Heart left ventricle (tissue), 16 donors: ENCODE measurements at regions of chr10 and their contacts with region 1.

Region 1: DNA sequence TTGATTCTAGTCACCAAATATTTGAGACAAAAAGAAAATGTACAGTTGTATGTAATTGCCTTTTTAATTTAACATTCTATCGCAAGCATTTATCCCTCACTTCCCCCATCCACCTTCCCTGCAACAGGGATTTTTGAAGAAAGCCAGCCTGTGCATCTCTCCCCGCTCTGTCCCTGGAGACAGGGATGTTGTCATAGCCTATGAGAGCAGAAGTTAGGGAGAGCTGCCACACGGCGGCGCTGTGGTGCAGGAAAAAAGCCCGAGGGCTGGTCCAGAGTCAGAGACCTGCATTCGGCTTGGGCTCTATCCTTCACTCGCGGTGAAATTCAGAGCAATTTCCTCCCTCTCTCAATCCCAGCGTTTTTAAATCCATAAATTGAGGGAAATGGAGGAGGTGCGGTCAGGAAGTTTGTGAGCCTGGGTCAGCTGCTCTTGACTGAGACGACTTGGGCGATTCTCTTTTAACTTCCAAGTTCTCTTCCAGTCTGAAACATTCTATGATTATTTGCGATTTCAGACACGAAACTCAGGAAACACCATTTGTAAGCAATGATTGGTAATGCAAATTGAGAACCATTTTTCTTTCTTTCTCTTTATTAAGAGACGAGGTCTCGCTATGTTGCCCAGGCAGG is 17.5 kb downstream of the HKDC1 start:
- DNase-seq: peak; percentile 82 to 92 (median 86)
- ATAC-seq: peak; percentile 92 to 99 (median 98)
- H3K4me3 ChIP-seq: peak overlapping the region in 1 of 12 donors; percentile 16
- H3K27ac ChIP-seq: no peak overlapping the region
- H3K4me1 ChIP-seq: peaks cover 0 to 10% (median 3%) of the 10 kb centered on the region in 12 donors
- H3K27me3 ChIP-seq: no peaks in the 10 kb centered on the region
- CTCF ChIP-seq: peak; percentile 80 to 96 (median 92)
- POLR2A ChIP-seq: no peak

Region 2: GRCh38 chr10:69312533-69312932 is 74.9 kb after region 1 on chr10:
- intact Hi-C with region 1: loop called in 3 of 10 experiments (anchors 2 to 10 kb)
- DNase-seq: no peak
- ATAC-seq: no peak
- H3K4me3 ChIP-seq: no peak overlapping the region
- H3K27ac ChIP-seq: no peak overlapping the region
- H3K4me1 ChIP-seq: peaks cover 0 to 21% (median 9%) of the 10 kb centered on the region in 12 donors
- H3K27me3 ChIP-seq: no peaks in the 10 kb centered on the region
- CTCF ChIP-seq: no peak
- POLR2A ChIP-seq: no peak

Region 3: DNA sequence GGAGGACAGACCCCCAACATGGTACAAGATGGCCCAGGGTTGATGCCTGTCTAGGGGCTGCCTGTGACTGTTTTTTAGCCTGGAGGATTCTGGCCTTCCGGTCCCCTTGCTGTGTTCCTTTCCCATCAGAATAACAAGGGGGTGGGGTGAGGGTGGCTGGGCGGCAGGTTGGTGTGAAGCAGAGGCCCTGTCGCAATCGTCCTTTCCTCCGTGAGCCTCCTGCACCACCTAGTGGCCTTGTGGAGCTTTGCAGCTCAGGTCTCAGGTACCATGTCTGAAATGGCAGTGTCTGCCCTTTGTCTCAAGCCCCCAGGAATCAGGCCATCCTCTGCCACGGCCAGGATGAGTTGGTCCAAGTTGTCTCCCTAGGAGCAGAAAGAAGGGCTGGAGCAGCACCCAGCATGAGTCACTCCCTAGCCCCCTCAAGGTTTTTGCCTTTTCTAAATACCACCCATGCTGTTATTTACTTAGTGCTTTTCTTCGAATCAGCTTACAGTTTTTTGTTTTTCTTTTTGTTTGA is 154.9 kb after region 1 on chr10:
- intact Hi-C with region 1: loop called (anchors 1 to 2 kb)
- DNase-seq: peak; percentile 83 to 90 (median 85)
- ATAC-seq: peak; percentile 84 to 92 (median 90)
- H3K4me3 ChIP-seq: no peak overlapping the region
- H3K27ac ChIP-seq: peak overlapping the region in 1 of 12 donors; percentile 9
- H3K4me1 ChIP-seq: peaks cover 0 to 41% (median 20%) of the 10 kb centered on the region in 12 donors
- H3K27me3 ChIP-seq: no peaks in the 10 kb centered on the region
- CTCF ChIP-seq: peak; percentile 89 to 98 (median 96)
- POLR2A ChIP-seq: no peak

Region 4: DNA sequence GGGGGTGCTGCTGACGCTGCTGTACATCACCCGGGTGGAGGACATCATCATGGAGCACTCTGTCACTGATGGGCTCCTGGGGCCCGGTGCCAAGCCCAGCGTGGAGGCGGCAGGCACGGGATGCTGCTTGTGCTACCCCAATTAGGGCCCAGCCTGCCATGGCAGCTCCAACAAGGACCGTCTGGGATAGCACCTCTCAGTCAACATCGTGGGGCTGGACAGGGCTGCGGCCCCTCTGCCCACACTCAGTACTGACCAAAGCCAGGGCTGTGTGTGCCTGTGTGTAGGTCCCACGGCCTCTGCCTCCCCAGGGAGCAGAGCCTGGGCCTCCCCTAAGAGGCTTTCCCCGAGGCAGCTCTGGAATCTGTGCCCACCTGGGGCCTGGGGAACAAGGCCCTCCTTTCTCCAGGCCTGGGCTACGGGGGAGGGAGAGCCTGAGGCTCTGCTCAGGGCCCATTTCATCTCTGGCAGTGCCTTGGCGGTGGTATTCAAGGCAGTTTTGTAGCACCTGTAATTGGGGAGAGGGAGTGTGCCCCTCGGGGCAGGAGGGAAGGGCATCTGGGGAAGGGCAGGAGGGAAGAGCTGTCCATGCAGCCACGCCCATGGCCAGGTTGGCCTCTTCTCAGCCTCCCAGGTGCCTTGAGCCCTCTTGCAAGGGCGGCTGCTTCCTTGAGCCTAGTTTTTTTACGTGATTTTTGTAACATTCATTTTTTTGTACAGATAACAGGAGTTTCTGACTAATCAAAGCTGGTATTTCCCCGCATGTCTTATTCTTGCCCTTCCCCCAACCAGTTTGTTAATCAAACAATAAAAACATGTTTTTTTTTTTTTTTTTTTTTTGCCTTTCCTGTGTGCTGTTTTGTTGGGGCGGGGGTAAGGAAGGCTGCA is 269.4 kb after region 1 on chr10:
- intact Hi-C with region 1: loop called in 8 of 10 experiments (anchors 5 to 10 kb)
- DNase-seq: no peak
- ATAC-seq: peak in 3 of 4 donors; percentile 8 to 40 (median 19)
- H3K4me3 ChIP-seq: peak overlapping the region in 7 of 12 donors; percentile 21 to 43 (median 30)
- H3K27ac ChIP-seq: peak overlapping the region in 10 of 12 donors; percentile 11 to 74 (median 43)
- H3K4me1 ChIP-seq: peaks cover 0 to 13% (median 4%) of the 10 kb centered on the region in 12 donors
- H3K27me3 ChIP-seq: no peaks in the 10 kb centered on the region
- CTCF ChIP-seq: no peak
- POLR2A ChIP-seq: no peak

Region 5: DNA sequence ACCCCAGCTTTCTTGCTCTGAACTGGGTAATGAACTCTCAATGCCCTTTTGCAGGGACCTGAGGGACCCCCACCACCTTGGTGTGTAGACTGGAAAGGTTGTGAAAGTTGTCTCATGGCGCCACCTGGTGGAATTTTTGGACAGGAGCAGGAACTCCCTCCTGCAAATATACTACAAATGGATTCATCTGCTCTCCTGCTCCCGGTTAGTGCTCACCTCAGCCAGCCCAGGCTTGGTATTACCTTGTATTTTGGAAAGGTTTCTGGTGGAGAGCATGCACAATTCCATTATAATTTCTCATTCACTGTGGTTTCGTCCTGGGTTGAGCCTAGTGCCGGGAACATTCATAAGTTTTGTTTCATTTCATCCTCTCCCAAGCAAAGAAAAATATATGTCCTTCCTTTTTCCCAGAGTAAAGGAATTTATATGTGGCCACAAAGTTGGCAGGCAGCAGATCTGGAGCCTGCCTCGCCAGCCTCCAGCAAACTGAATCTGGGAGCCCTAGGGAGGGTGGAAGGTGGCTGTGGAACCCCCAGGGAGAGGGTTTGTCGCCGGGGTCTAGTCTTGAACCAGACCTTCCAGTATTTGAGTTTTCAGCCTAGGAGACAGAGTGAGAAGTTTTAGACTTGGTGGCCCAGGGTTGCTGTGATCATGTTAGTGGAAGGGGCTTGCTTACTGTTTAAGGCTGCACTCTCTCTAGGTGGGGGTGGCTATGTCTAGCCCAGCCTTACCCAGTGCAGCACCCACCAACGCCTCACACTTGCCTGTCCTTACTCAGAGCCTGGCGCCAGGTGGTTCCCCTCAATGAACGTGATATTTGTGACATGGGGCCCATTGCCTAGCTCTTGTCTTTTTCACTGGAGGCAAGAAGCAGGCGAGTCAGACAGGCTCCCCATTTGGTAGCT is 401.9 kb after region 1 on chr10:
- intact Hi-C with region 1: loop called in 4 of 10 experiments (anchors 10 kb)
- DNase-seq: peak in 4 of 5 donors; percentile 46 to 56 (median 48)
- ATAC-seq: peak in 2 of 4 donors; percentile 60 to 68
- H3K4me3 ChIP-seq: no peak overlapping the region
- H3K27ac ChIP-seq: no peak overlapping the region
- H3K4me1 ChIP-seq: no peaks in the 10 kb centered on the region
- H3K27me3 ChIP-seq: peaks cover 0 to 13% (median 4%) of the 10 kb centered on the region in 9 donors
- CTCF ChIP-seq: peak; percentile 73 to 87 (median 85)
- POLR2A ChIP-seq: no peak